Right lobe of liver (tissue), 6 donors: ENCODE measurements at regions of chr17 and their contacts with region 1.

Region 1: DNA sequence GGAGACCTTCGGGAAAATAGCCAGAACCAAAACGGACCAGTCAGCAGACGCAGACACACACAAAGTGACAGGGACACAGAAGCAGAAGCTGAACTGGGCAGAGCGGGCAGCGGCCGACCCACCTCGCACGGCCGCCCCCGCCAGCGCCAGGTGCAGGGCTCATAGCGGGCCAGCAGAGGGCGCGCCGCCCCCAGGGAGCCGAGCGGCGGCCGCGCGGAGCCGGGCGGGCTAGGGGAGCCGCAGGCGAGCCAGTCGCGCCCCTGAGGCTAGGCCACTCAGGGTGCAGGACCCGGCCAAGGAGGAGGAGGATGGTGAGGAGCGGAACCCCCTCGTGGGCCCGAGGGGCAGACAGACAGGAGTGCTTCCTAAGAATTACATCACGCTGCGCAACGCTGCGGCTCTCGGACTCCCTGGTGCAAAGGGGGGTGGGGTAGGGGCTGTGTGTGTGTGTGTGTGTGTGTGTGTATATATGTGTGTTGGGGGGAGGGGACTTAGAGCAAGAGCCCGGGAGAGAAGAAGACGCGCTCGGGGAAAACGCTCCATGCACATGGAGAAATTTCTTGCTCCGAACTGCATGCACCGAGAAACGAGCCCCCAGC is 913 bp upstream of the NOG start:
- DNase-seq: peak; percentile 62 to 66 (median 64)
- ATAC-seq: peak; percentile 80 to 84 (median 82)
- H3K4me3 ChIP-seq: peak overlapping the region; percentile 39 to 58 (median 44)
- H3K27ac ChIP-seq: no peak overlapping the region
- H3K4me1 ChIP-seq: peaks cover 0 to 28% (median 7%) of the 10 kb centered on the region in 4 donors
- H3K27me3 ChIP-seq: peaks cover 0 to 12% of the 10 kb centered on the region in 2 donors
- CTCF ChIP-seq: peak; percentile 94 to 100 (median 96)
- POLR2A ChIP-seq: no peak

Region 2: DNA sequence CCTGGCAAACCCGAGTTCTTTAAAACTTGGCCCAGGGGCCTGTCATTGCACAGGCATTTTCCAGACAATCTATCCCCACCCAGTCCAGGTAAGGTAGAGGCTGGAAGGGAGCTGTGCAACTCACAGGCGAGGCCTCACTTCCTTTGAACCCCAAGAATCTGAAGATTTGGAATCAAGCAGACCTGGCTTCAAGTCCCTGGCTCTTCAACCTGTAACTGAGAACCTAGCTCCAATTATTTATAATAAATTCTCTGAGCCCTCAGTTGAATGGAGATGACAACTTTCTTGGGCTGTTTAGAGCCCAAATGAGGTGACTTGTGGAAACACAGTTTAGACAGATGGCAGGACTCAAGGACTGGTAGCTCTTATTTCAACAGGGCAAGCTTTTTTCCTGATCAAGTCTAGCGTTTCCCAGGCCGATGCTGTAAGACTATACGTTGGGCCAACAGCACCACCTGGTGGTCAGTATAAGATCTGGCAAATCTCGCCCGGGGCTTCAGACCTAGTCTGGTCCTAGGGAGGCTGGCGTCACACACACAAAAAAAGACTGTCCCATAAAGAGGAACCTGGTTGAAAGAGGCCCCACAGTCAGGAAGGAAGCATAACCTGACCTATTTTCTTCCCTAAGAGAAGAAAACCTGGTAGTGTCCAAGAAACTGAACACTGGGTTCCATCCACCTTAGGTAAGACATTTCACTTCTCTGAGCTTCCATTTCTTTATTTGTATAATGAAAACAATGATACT is 123.2 kb after region 1 on chr17:
- intact Hi-C with region 1: loop called (anchors 5 to 10 kb)
- DNase-seq: peak; percentile 68 to 76 (median 74)
- ATAC-seq: peak; percentile 91 to 98 (median 96)
- H3K4me3 ChIP-seq: no peak overlapping the region
- H3K27ac ChIP-seq: no peak overlapping the region
- H3K4me1 ChIP-seq: no peaks in the 10 kb centered on the region
- H3K27me3 ChIP-seq: no peaks in the 10 kb centered on the region
- CTCF ChIP-seq: peak; percentile 73 to 87 (median 84)
- POLR2A ChIP-seq: no peak